ENCODE measurements at regions of chr2 and their contacts with region 1.

Region 1: DNA sequence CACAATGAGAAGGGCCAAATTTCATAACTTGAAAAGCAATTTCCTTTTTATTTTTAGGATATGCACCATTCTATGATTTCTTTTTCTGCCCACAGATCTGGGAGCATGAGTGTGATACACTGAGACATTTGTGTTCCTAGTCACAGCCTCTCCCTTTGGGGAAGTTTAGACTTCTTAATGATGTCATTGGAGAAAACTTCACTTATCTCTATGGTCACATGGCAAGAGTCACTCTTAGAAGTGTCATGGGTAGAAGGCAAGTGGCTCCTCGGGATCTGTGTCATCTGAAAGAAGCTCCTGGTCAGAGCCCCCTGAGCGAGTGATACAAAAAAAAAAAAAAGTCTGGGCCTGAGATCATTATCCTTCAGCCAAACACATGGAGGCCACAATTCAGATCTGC is 62.5 kb upstream of the LGALSL start:
- DNase-seq: peak; percentile 36 to 43
- H3K4me3 ChIP-seq: no peak overlapping the region
- H3K4me3 Mint-ChIP-seq: peak overlapping the region; percentile 12
- H3K27ac Mint-ChIP-seq: peak overlapping the region; percentile 63
- H3K4me1 ChIP-seq: peaks cover 49% of the 10 kb centered on the region
- H3K4me1 Mint-ChIP-seq: peaks cover 39% of the 10 kb centered on the region
- H3K27me3 ChIP-seq: no peaks in the 10 kb centered on the region
- H3K27me3 Mint-ChIP-seq: no peaks in the 10 kb centered on the region
- CTCF ChIP-seq: no peak

Region 2: DNA sequence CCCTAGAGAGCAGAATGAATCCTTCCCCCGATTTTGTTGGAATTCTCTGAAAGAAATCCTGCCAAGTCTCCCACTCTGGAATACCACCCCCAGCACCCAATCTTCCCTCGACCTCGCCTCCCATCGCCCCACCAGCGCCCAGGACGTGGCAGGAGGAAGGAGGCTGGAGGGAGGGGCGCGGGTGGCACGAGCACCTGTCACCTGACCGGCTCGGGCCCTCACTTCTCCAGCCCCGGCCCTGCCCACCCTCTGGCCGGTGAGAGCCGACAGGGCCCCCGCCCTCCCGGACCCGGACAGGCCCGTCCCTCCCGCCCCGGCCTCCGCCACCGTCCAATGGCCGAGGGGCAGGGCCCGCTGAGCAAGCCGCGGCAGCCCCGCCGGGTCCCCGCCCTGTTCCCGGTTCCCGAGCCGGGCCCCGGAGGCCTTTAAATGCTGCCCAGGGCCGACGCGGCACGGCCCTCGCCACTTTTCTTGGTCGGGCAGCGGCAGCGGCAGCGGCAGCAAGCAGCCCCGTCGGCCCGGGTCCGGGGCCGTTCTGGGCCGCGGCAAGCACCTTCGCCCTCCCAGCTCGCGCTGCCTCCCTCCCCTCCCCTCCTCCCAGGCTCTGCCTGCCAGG is 62.5 kb after region 1 on chr2 and contains the start of gene LGALSL:
- CTCF ChIA-PET with region 1: no interaction called
- POLR2A ChIA-PET with region 1: interaction called, 4 read pairs
- intact Hi-C with region 1: loop called (anchors 2 kb)
- DNase-seq: peak; percentile 93 to 94
- H3K4me3 ChIP-seq: peak within 1 kb of the TSS; percentile 80
- H3K4me3 Mint-ChIP-seq: peak within 1 kb of the TSS; percentile 94
- H3K27ac Mint-ChIP-seq: peak within 1 kb of the TSS; percentile 98
- H3K4me1 ChIP-seq: peaks cover 11% of the 10 kb centered on the region
- H3K4me1 Mint-ChIP-seq: peaks cover 13% of the 10 kb centered on the region
- H3K27me3 ChIP-seq: no peaks in the 10 kb centered on the region
- H3K27me3 Mint-ChIP-seq: no peaks in the 10 kb centered on the region
- CTCF ChIP-seq: no peak
- total RNA-seq, gene LGALSL: 36.9 and 37.2 TPM in 2 replicates

Region 3: DNA sequence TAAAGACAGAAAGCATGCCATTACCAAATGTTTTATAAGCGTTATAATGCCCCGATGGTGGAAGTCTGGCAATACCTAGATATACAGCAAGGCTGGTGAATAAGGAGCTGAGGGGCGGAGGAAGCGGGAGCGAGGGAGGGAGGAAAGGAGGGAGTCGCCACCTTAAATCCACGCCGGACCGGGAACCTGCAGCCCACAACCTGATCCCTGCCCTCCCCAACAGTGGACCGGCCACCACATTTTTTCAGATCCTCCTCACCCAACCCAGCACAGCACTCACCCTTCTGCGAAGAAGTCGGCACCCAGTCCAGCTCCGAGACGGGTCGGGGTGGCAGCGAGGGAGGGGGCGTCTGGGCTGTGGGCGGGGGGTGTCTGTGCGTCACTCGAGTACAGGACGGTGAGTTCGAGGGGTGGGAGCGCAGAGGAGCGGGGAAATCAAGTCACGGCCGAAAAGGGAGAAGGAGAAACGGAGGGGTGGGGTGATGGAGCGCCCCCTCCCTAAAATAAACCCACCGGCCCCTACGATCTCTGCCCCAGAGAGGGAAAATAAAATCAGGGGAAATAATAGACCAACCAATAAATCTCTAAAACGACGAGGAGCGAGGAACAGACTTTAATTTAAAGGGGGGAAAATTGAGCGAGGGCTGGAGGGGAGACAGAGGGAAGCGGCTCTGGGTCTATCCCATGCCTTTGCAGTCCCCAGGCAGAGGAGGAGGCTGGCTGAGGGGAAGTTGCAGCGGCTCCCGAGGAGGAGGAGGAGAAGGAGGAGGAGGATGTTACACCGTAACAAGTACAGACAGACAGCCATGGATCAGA is 358.8 kb after region 1 on chr2:
- CTCF ChIA-PET with region 1: no interaction called
- POLR2A ChIA-PET with region 1: no interaction called
- intact Hi-C with region 1: no loop called
- DNase-seq: peak; percentile 41 to 53
- H3K4me3 ChIP-seq: peak overlapping the region; percentile 73
- H3K4me3 Mint-ChIP-seq: peak overlapping the region; percentile 96
- H3K27ac Mint-ChIP-seq: peak overlapping the region; percentile 93
- H3K4me1 ChIP-seq: peaks cover 22% of the 10 kb centered on the region; the same call in 1 of the 2 replicates
- H3K4me1 Mint-ChIP-seq: peaks cover 16% of the 10 kb centered on the region
- H3K27me3 ChIP-seq: no peaks in the 10 kb centered on the region
- H3K27me3 Mint-ChIP-seq: no peaks in the 10 kb centered on the region
- CTCF ChIP-seq: peak; percentile 9

Measured in Caco-2 (cell line).